Aorta (tissue), 5 donors: ENCODE measurements at regions of chr5 and their contacts with region 1.

Region 1: GRCh38 chr5:139696894-139697658 is 48.9 kb downstream of the CXXC5 start:
- DNase-seq: peak; percentile 92 to 93
- ATAC-seq: peak; percentile 87
- H3K4me3 ChIP-seq: peak overlapping the region; percentile 1 to 2
- H3K27ac ChIP-seq: peak overlapping the region; percentile 60 to 74
- H3K4me1 ChIP-seq: no peaks in the 10 kb centered on the region
- H3K27me3 ChIP-seq: no peaks in the 10 kb centered on the region

Region 2: GRCh38 chr5:139658928-139659667 is 38.0 kb before region 1 on chr5:
- intact Hi-C with region 1: loop called in 1 of 2 experiments (anchors 5 kb)
- DNase-seq: peak in 1 of 2 donors; percentile 81
- ATAC-seq: no peak
- H3K4me3 ChIP-seq: no peak overlapping the region
- H3K27ac ChIP-seq: peak overlapping the region; percentile 89 to 90
- H3K4me1 ChIP-seq: peaks cover 0 to 1% of the 10 kb centered on the region in 2 donors
- H3K27me3 ChIP-seq: no peaks in the 10 kb centered on the region

Region 3: DNA sequence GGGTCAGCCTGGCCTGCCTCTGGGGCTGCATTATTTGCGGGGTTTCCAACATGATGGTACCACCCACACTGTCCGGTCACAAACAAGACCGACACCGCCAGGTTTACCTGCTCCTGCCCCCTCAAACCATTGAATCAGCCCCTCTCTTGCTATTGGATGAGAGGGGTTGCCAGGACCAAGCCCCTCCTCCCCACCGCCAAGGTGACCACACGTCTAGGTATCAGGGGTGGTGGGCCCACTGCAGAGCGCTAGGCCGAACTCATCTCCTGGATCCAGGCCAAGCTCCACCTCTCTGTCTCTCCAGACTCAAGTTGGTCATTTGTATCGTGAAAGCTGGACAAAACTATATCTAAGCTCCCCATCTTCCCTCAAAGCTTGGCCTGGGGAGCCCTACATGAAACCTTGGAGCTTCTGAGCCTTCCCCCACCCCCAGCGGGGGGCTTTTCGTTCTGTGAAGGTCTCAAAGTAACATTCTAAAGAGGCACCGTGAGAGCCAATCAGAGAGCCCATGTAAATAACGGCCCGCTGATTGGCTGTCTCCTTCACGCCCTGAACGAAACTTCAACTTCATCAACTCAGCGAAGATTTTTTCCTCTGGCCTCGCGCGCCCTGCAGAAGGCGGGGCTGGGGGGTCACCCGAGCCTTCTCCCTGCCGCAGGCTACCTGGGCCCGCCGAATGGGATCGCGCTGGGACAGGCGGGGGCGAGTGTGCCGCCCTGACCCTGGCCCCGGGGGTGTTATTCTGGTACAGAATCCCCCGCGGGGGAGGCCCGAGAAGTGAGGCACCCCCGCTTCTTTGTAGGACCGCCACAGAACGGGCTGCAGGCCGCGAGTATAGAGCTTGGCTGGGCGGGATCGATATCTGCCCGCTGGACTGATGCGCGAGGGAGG is 49.0 kb after region 1 on chr5:
- intact Hi-C with region 1: loop called in 1 of 2 experiments (anchors 5 kb)
- DNase-seq: peak; percentile 79 to 87
- ATAC-seq: peak; percentile 77
- H3K4me3 ChIP-seq: peak overlapping the region; percentile 18 to 22
- H3K27ac ChIP-seq: peak overlapping the region in 1 of 2 donors; percentile 4
- H3K4me1 ChIP-seq: no peaks in the 10 kb centered on the region
- H3K27me3 ChIP-seq: no peaks in the 10 kb centered on the region

Region 4: GRCh38 chr5:139765409-139766217 is 68.5 kb after region 1 on chr5:
- intact Hi-C with region 1: loop called (anchors 5 kb)
- DNase-seq: peak; percentile 85 to 95
- ATAC-seq: peak; percentile 95
- H3K4me3 ChIP-seq: peak overlapping the region in 1 of 2 donors; percentile 30
- H3K27ac ChIP-seq: no peak overlapping the region
- H3K4me1 ChIP-seq: no peaks in the 10 kb centered on the region
- H3K27me3 ChIP-seq: no peaks in the 10 kb centered on the region